Calu3 (cell line): ENCODE measurements at regions of chr12 and their contacts with region 1.

Region 1: GRCh38 chr12:4030929-4031702 is 157.9 kb upstream of the PARP11 start:
- DNase-seq: peak; percentile 94
- H3K4me3 Mint-ChIP-seq: peak overlapping the region; percentile 68
- H3K27ac Mint-ChIP-seq: peak overlapping the region; percentile 95
- H3K4me1 Mint-ChIP-seq: peaks cover 24% of the 10 kb centered on the region
- H3K27me3 Mint-ChIP-seq: peaks cover 61% of the 10 kb centered on the region
- CTCF ChIP-seq: no peak

Region 2: DNA sequence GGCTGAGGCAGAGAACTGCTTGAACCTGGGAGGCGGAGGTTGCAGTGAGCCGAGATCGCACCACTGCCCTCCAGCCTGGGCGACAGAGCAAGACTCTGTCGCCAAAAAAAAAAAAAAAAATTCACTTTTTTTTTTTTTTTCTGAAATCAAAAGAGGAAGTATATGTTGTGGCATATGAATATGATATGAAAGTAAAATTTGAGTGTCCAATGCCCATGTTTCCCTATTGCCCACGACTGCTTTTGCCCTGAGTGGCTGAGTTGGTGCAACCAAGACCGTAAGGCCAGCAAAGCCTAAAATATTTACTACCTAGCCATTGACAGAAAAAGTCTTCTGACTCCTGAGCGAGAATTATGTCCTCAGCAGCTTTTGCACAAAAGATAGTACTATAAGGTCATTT is 56.2 kb before region 1 on chr12:
- CTCF ChIA-PET with region 1: no interaction called
- intact Hi-C with region 1: no loop called
- DNase-seq: no peak
- H3K4me3 Mint-ChIP-seq: no peak overlapping the region
- H3K27ac Mint-ChIP-seq: no peak overlapping the region
- H3K4me1 Mint-ChIP-seq: no peaks in the 10 kb centered on the region
- H3K27me3 Mint-ChIP-seq: peaks cover 70% of the 10 kb centered on the region
- CTCF ChIP-seq: no peak

Region 3: DNA sequence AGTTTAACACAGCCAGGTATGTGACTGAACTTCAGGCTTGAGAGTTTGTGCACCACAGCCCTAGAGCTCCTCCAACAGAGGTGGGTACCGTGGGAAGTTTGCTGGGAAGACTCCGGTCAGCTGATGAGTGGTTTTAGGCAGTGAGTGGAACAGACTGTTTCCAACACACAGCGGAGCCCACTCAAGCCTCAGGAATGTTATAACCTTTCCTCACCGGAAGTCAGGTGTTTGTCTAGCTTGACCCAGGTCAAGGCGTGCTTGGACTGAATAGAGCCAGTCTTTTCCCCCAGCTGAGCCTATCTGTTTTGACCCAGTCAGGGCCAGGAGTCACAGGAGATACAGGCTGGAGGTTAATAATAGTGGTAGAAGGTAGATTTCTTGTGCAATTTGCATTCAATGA is 19.5 kb before region 1 on chr12:
- CTCF ChIA-PET with region 1: interaction called, 24 read pairs
- intact Hi-C with region 1: no loop called
- DNase-seq: peak; percentile 69
- H3K4me3 Mint-ChIP-seq: peak overlapping the region; percentile 43
- H3K27ac Mint-ChIP-seq: peak overlapping the region; percentile 78
- H3K4me1 Mint-ChIP-seq: peaks cover 51% of the 10 kb centered on the region
- H3K27me3 Mint-ChIP-seq: no peaks in the 10 kb centered on the region
- CTCF ChIP-seq: no peak